ENCODE measurements at regions of chr2 and their contacts with region 1.

Region 1: DNA sequence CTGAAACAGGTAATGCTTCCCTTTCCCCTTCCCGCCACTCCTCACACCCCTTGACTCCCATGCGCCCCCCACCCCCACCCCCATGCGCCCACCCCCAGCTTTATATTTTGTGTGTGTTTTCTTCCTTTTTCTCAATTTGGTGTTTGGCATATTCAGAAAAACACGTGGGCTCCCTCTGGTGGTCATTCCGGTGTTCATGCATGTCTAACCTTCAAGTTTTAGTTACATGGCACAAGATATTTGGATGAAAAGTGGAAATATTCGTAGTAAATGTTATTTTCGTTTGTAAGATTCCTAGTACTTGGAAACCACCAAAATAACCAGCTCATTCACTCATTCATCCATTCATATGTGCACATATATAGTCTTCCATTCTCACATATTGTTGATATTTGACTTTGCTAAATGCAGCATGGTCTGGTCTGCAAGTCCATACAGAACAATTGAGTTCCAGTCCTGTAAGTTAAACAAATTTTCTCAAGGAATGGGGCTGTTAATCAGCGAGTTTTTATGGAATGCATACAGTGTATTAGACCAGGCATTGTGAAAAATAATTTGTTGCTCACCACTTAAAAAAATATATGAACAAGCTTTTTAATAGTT is 143.6 kb upstream of the MAP3K20 start:
- DNase-seq: peak; percentile 63
- H3K4me3 ChIP-seq: peak overlapping the region in 1 of 4 donors; percentile 2
- H3K27ac ChIP-seq: peak overlapping the region in 2 of 4 donors; percentile 28 to 59
- H3K4me1 ChIP-seq: peaks cover 0 to 21% (median 2%) of the 10 kb centered on the region in 4 donors
- H3K27me3 ChIP-seq: peaks cover 19% of the 10 kb centered on the region
- CTCF ChIP-seq: peak; percentile 50 to 76 (median 68)
- EP300 ChIP-seq: no peak
- POLR2A ChIP-seq: no peak

Region 2: GRCh38 chr2:172806493-172806892 is 125.5 kb before region 1 on chr2:
- in situ Hi-C with region 1: loop called (anchors 10 to 25 kb)
- intact Hi-C with region 1: loop called (anchors 5 kb)
- DNase-seq: no peak
- H3K4me3 ChIP-seq: no peak overlapping the region
- H3K27ac ChIP-seq: no peak overlapping the region
- H3K4me1 ChIP-seq: peaks cover 0 to 7% (median 6%) of the 10 kb centered on the region in 4 donors
- H3K27me3 ChIP-seq: peaks cover 11% of the 10 kb centered on the region
- CTCF ChIP-seq: peak; percentile 62 to 79 (median 73)
- EP300 ChIP-seq: no peak
- POLR2A ChIP-seq: no peak

Region 3: GRCh38 chr2:172864182-172864581 is 67.8 kb before region 1 on chr2:
- in situ Hi-C with region 1: loop called in 2 of 4 experiments (anchors 10 kb)
- intact Hi-C with region 1: loop called (anchors 5 kb)
- DNase-seq: peak; percentile 54
- H3K4me3 ChIP-seq: no peak overlapping the region
- H3K27ac ChIP-seq: no peak overlapping the region
- H3K4me1 ChIP-seq: peaks cover 0 to 5% (median 0%) of the 10 kb centered on the region in 4 donors
- H3K27me3 ChIP-seq: peaks cover 43% of the 10 kb centered on the region
- CTCF ChIP-seq: peak; percentile 62 to 72 (median 63)
- EP300 ChIP-seq: no peak
- POLR2A ChIP-seq: no peak